ENCODE measurements at regions of chrX and their contacts with region 1.

Region 1: DNA sequence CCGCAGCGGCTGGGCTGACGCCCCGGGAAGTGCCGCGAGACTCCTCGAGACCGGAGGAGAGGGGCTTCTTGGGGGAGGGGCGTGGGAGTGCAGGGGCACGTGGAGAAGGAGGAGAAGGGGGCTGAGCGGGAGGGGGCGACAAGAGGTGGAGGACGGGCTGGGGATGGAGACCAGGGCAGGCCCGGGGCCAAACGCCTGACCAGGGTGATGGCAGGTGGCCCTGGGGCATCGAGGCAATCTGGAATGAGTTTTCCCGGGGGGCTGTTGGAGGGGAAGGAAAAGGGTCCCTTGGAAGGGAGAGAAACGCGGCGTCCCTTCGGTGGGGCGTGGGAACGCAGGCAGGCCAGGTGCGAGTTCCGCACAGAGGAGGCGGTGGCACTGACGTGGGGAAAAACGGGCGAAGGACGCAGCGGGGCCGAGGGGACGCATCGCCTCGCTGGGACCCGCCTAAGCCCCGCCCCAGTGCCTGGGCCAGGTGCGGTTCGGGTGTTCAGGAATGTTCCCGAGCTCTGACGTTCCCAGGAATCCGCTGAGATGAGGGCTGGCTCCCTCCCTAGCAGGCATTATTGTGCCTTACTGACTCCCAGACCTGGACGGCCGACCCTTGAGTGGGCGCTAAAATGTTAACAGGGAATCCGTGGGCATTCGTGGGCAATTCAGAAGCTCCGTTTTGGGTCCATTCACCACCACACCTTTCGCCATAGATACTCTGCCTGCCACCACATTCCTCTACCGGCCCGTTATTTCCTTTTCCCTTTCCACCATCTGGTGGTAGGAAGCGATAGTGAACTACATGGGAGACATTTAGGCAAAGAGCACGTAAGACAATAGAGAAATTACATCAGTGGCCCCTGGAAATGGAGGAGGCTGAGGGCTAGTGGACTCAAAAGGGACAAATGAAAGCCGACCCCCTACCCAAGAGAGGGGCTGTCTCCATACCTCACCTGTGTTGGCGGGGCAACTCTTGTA is 795 bp upstream of the SH3KBP1 start:
- DNase-seq: peak; percentile 30 to 35
- ATAC-seq: peak; percentile 70 to 90 (median 83)
- H3K4me3 ChIP-seq: peak overlapping the region; percentile 28 to 81 (median 69)
- H3K27ac ChIP-seq: peak overlapping the region in 9 of 10 donors; percentile 35 to 67 (median 60)
- H3K4me1 ChIP-seq: peaks cover 0 to 25% (median 0%) of the 10 kb centered on the region in 9 donors
- H3K27me3 ChIP-seq: peaks cover 0 to 7% (median 0%) of the 10 kb centered on the region in 7 donors
- CTCF ChIP-seq: peak; percentile 15 to 68 (median 54)

Region 2: DNA sequence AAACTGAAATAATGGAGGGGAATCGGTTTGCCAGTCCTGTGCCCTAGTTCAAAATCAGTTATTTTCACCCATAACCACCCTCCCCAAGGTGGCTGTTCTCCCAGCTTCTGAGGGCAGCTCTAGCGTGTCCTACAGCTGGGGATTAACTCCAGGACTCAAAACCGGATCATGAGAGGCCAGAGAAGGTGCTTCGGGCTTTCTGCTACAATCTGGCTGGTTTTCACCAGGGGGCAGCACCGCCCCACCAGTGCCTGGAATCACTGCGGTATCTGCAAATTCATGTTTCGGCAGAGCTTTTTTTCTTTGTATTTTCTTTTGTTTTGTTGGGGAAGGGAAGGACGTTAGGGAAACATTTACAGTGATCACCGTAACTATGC is 516.0 kb before region 1 on chrX:
- intact Hi-C with region 1: loop called in 7 of 10 experiments (anchors 10 kb)
- DNase-seq: peak; percentile 50 to 57
- ATAC-seq: peak in 7 of 8 donors; percentile 66 to 84 (median 76)
- H3K4me3 ChIP-seq: peak overlapping the region in 8 of 10 donors; percentile 13 to 56 (median 48)
- H3K27ac ChIP-seq: no peak overlapping the region
- H3K4me1 ChIP-seq: peaks cover 0 to 5% (median 0%) of the 10 kb centered on the region in 9 donors
- H3K27me3 ChIP-seq: peaks cover 0 to 3% (median 0%) of the 10 kb centered on the region in 7 donors
- CTCF ChIP-seq: peak; percentile 24 to 75 (median 64)

Region 3: DNA sequence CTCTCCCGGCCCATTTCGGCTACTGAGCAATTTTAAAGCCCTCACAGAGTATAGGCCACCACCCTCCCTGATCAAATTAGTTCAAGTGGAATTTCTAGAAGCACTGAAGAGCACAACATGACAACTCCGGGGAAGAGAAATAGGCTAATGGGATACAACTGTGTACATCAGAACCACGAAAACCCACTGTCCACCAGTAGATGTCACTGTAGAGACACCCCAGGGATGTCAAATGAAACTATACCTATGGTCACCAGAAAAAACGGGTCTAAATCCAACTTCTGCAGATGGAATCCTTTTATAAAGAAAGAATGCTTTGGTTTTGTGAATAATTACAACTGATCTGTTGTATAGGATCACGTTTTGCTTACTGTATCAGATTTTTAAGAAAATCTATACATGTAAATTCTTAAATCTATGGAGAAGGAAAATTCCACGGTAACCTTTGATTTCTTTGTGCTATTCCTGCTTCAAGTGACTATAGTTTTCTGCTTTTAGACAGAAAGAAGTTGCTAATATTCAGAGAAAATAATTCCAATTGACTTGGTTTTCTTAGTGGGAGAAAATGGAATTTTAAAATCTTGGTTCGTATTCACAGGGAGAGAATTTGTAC is 343.4 kb before region 1 on chrX:
- intact Hi-C with region 1: loop called in 4 of 10 experiments (anchors 2 to 10 kb)
- DNase-seq: peak in 1 of 2 donors; percentile 22
- ATAC-seq: peak; percentile 48 to 93 (median 79)
- H3K4me3 ChIP-seq: no peak overlapping the region
- H3K27ac ChIP-seq: peak overlapping the region in 2 of 10 donors; percentile 28 to 36
- H3K4me1 ChIP-seq: peaks cover 0 to 12% (median 0%) of the 10 kb centered on the region in 9 donors
- H3K27me3 ChIP-seq: no peaks in the 10 kb centered on the region
- CTCF ChIP-seq: peak in 8 of 9 donors; percentile 15 to 86 (median 68)

Region 4: DNA sequence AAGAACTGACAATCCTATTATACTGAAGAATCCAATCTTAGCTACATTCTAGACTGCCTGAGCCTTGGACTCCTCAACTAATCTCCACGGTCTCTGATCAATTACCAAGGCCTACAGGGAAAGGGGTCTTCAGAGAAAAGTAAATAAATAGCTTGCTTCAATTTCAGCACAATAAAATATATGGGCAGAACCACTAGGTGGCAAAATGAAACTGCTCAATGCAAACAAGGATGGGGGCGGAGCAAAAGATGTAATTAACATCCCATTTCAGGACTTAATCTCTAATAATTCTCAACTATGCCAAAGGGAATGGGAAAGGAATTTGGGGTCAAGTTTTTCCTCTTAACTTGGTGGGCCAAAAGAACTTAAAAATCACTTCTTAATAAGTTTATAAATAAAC is 294.5 kb before region 1 on chrX:
- intact Hi-C with region 1: loop called in 8 of 10 experiments (anchors 2 to 10 kb)
- DNase-seq: peak in 1 of 2 donors; percentile 25
- ATAC-seq: peak in 3 of 8 donors; percentile 55 to 73 (median 58)
- H3K4me3 ChIP-seq: no peak overlapping the region
- H3K27ac ChIP-seq: no peak overlapping the region
- H3K4me1 ChIP-seq: peaks cover 0 to 22% (median 8%) of the 10 kb centered on the region in 9 donors
- H3K27me3 ChIP-seq: no peaks in the 10 kb centered on the region
- CTCF ChIP-seq: peak; percentile 19 to 64 (median 53)

Region 5: GRCh38 chrX:19673375-19674040 is 214.7 kb before region 1 on chrX:
- intact Hi-C with region 1: loop called in 1 of 10 experiments (anchors 5 kb)
- DNase-seq: peak; percentile 53 to 64
- ATAC-seq: peak; percentile 20 to 86 (median 66)
- H3K4me3 ChIP-seq: no peak overlapping the region
- H3K27ac ChIP-seq: peak overlapping the region in 1 of 10 donors; percentile 21
- H3K4me1 ChIP-seq: peaks cover 0 to 37% (median 5%) of the 10 kb centered on the region in 9 donors
- H3K27me3 ChIP-seq: no peaks in the 10 kb centered on the region
- CTCF ChIP-seq: no peak

Region 6: DNA sequence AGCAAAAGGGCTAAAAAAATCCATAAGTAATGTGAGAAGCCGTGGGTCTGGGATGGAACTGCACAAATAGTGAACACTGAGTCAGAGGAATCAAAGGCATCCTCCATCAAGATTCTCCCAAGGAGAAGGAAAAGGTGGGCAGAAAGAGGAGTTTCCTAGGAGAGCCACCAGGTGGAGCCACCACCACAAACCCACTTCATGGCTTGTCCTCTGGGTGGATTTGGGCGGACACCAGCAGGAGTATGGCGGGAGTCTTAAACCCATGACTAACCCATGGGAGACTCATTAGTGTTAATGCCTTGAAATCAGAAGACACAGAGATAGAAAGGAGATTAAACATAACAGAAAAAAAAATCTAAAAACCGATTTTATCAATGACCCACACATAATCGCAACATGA is 148.5 kb before region 1 on chrX:
- intact Hi-C with region 1: loop called in 9 of 10 experiments (anchors 1 to 10 kb)
- DNase-seq: peak; percentile 48 to 49
- ATAC-seq: peak in 6 of 8 donors; percentile 52 to 86 (median 69)
- H3K4me3 ChIP-seq: no peak overlapping the region
- H3K27ac ChIP-seq: no peak overlapping the region
- H3K4me1 ChIP-seq: peaks cover 0 to 9% (median 0%) of the 10 kb centered on the region in 9 donors
- H3K27me3 ChIP-seq: peaks cover 0 to 3% (median 0%) of the 10 kb centered on the region in 7 donors
- CTCF ChIP-seq: peak; percentile 28 to 74 (median 64)

Region 7: GRCh38 chrX:19785647-19786046 is 102.5 kb before region 1 on chrX:
- intact Hi-C with region 1: no loop called
- DNase-seq: no peak
- ATAC-seq: no peak
- H3K4me3 ChIP-seq: no peak overlapping the region
- H3K27ac ChIP-seq: no peak overlapping the region
- H3K4me1 ChIP-seq: peaks cover 0 to 18% (median 0%) of the 10 kb centered on the region in 9 donors
- H3K27me3 ChIP-seq: no peaks in the 10 kb centered on the region
- CTCF ChIP-seq: no peak